Ascending aorta (tissue), 2 donors: ENCODE measurements at regions of chr1 and their contacts with region 1.

Region 1: GRCh38 chr1:20507564-20508410 is at the start of gene MUL1:
- DNase-seq: peak; percentile 80 to 97
- H3K4me3 ChIP-seq: peak within 1 kb of the TSS; percentile 72 to 98
- H3K27ac ChIP-seq: peak within 1 kb of the TSS; percentile 63 to 90
- H3K4me1 ChIP-seq: peaks cover 0 to 24% of the 10 kb centered on the region in 2 donors
- H3K27me3 ChIP-seq: no peaks in the 10 kb centered on the region
- CTCF ChIP-seq: no peak
- total RNA-seq, gene MUL1: 34.7 TPM

Region 2: GRCh38 chr1:20485527-20486456 is 22.0 kb before region 1 on chr1 and contains the start of gene CAMK2N1:
- intact Hi-C with region 1: loop called (anchors 1 kb)
- DNase-seq: peak in 1 of 2 donors; percentile 81
- H3K4me3 ChIP-seq: peak within 1 kb of the TSS; percentile 70 to 75
- H3K27ac ChIP-seq: peak within 1 kb of the TSS; percentile 54 to 71
- H3K4me1 ChIP-seq: peaks cover 8 to 15% of the 10 kb centered on the region in 2 donors
- H3K27me3 ChIP-seq: no peaks in the 10 kb centered on the region
- CTCF ChIP-seq: no peak
- total RNA-seq, gene CAMK2N1: 1.9 TPM

Region 3: GRCh38 chr1:20540281-20540680 is 32.5 kb after region 1 on chr1:
- intact Hi-C with region 1: no loop called
- DNase-seq: no peak
- H3K4me3 ChIP-seq: no peak overlapping the region
- H3K27ac ChIP-seq: no peak overlapping the region
- H3K4me1 ChIP-seq: no peaks in the 10 kb centered on the region
- H3K27me3 ChIP-seq: no peaks in the 10 kb centered on the region
- CTCF ChIP-seq: no peak

Region 4: DNA sequence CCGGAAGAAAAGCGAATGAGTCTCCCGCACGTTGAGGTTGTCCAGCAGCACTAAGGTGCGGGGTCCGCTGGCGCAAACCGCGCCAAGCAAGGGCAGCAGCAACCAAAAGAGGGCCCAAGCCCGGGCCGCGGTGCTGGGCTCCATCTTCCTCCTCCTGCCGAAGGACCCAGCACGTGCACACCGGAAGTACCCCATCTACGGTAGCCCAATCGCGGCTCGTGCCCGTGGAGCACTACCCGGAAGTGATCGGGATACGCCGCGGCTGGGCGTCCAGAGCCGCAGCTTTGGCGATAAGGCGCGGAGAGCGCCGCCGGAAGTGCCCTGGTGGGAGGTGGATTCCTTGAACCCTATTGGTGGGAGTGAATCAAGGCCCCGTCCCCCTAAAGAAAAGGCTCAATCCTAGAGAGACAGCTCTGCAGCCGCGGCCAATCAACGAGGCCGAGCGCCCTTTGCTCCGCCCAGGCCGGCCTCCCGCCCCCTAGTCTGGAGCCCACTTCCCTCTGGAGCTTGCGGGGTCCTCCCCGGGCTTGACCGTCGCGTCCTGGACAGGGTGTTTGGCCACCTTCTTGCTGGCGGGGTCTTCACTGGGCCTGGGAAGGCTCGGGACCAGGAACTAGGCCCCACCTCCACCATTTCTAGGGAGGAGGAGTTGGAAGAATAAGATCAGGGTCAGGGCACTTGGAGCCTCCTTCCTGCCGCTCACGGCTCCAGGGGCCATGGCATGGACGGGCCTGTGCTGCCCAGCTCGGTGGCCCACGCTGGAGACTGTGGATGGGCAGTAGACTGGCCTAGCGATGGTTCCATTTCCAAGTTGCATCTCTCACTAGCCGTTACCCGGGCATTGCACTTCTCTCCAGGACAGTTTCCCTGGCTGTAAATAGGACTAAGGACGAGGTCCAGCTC is 153.7 kb after region 1 on chr1 and contains the start of gene DDOST:
- intact Hi-C with region 1: loop called (anchors 1 kb)
- DNase-seq: peak; percentile 82 to 98
- H3K4me3 ChIP-seq: peak within 1 kb of the TSS; percentile 83 to 87
- H3K27ac ChIP-seq: peak within 1 kb of the TSS; percentile 89 to 90
- H3K4me1 ChIP-seq: peaks cover 6 to 18% of the 10 kb centered on the region in 2 donors
- H3K27me3 ChIP-seq: no peaks in the 10 kb centered on the region
- CTCF ChIP-seq: peak in 2 of 3 experiments; percentile 47 to 48
- total RNA-seq, gene DDOST: 142 TPM